ENCODE measurements at regions of chr1 and their contacts with region 1.

Region 1: DNA sequence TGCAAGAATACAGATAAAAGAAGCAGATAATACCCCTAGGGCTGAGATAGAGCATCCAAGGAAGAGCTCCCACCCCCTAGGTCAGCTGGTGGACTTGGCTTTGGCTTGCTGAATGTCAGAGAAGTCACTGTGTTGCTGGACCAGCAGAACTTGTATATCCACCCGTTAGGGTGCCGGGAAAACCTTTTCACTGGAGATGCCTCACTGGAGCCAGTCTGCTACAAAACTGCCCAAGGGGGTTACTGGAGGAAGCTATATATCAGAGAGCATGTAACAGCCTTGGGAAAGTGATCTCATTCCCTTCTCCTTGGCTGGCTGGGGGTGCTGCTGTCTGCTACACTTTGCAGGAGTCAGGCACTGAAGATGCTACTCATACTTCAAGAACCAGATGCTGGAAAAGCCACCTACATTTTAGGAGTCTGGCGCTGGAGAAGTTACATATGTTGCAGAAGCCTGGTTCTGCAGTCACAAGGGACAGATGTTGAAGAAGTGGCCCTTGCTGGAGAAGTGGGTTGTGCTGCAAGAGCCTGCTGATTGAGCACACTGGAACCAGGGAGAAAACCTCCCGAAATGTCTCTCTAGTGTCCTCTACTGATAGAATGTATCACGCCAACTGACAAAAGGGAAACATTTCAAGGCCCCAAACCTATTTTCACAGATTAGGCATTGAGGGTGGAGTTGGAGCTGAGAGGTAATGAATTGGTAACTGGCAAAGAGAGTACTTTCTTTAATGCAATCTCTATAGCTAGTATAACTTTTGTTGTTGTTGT is 250.6 kb downstream of the SPATA17 start:
- DNase-seq: no peak
- ATAC-seq: no peak
- H3K4me3 Mint-ChIP-seq: no peak overlapping the region
- H3K27ac Mint-ChIP-seq: no peak overlapping the region
- H3K4me1 Mint-ChIP-seq: no peaks in the 10 kb centered on the region
- H3K27me3 Mint-ChIP-seq: no peaks in the 10 kb centered on the region

Region 2: DNA sequence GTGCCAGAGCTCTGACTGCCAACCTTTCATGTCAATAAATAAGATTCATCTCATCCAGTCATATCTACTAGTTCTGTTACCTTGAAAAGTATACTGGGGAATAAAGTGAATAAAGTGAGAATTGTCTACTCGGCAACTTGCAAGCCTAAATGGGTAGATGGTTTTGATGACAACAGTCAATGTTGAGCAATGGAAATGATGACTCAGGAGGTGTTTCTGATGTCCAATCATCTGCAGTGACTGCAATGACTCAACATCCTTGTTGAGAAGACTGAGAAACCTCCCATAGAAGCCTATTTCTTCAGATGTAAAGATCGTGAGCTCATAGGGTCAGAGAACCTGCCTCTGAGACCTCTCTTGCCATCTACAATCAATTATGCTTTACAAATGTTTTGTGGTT is 25.8 kb after region 1 on chr1:
- CTCF ChIA-PET with region 1: no interaction called
- POLR2A ChIA-PET with region 1: no interaction called
- intact Hi-C with region 1: loop called in 1 of 2 experiments (anchors 1 kb)
- DNase-seq: no peak
- ATAC-seq: peak; percentile 26
- H3K4me3 Mint-ChIP-seq: no peak overlapping the region
- H3K27ac Mint-ChIP-seq: no peak overlapping the region
- H3K4me1 Mint-ChIP-seq: no peaks in the 10 kb centered on the region
- H3K27me3 Mint-ChIP-seq: no peaks in the 10 kb centered on the region

Region 3: DNA sequence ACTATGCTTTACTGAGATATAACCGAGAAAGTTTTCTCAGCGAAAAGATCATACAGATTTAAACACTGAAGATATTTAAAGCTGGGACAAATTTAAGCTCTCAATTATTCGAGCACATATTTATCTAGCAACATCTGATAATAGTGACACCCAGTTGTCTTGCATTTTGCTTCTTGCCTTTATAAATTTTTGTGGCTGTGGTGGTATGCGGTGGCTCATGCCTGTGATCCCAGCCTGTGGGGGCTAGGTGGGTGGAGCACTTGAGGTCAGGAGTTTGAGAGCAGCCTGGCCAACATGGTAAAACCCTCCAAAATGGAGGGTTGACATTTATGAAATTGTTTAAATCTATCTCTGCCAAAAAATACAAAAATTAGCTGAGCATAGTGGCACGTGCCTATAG is 61.6 kb after region 1 on chr1:
- CTCF ChIA-PET with region 1: no interaction called
- POLR2A ChIA-PET with region 1: no interaction called
- intact Hi-C with region 1: no loop called
- DNase-seq: no peak
- ATAC-seq: no peak
- H3K4me3 Mint-ChIP-seq: no peak overlapping the region
- H3K27ac Mint-ChIP-seq: no peak overlapping the region
- H3K4me1 Mint-ChIP-seq: no peaks in the 10 kb centered on the region
- H3K27me3 Mint-ChIP-seq: no peaks in the 10 kb centered on the region